CD4-positive, alpha-beta T cell (primary cell): ENCODE measurements at regions of chr17 and their contacts with region 1.

Region 1: DNA sequence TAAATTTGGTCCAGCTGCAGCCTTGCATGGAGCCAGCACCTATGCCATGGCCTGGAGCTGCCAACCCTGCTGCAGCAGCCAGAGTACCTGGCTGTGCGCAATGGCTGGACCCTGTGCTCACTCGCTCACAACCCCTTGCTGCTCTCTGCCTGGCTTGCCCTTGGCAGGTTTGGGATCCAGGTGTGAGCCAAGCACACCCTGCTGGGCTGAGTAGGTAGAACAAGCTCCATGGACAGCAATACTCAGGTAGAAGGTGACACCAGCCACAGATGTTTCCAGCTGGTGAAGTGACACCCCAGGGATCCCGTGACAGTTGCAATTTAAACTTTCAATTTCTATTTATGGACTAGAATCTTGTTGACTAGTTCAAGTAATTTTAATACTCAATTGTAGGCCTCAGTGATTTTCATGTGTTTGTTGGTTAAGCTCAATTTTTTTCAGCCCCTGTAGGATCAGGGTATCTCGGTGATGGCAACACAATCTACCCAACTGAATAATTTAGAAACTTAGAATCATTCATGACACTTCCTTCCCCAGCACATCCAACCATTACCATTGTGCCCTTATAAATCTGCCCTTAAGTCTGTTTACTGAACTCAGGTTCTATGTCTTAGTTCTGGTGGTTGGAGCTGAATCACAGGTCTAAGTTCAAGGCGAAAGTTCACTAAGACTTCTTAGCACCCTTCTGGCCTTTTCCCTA is 480.0 kb downstream of the PMP22 start:
- DNase-seq: peak in 13 of 14 experiments; percentile 2 to 62 (median 30)
- ATAC-seq: peak; percentile 69
- H3K4me3 ChIP-seq: no peak overlapping the region
- H3K4me3 Mint-ChIP-seq: no peak overlapping the region
- H3K27ac ChIP-seq: no peak overlapping the region
- H3K27ac Mint-ChIP-seq: no peak overlapping the region
- H3K4me1 ChIP-seq: no peaks in the 10 kb centered on the region
- H3K4me1 Mint-ChIP-seq: no peaks in the 10 kb centered on the region
- H3K27me3 ChIP-seq: no peaks in the 10 kb centered on the region
- H3K27me3 Mint-ChIP-seq: peaks cover 11% of the 10 kb centered on the region
- CTCF ChIP-seq: peak; percentile 13

Region 2: GRCh38 chr17:14211801-14212200 is 573.3 kb before region 1 on chr17:
- CTCF ChIA-PET with region 1: no interaction called
- POLR2A ChIA-PET with region 1: no interaction called
- intact Hi-C with region 1: loop called (anchors 10 kb)
- DNase-seq: peak in 8 of 14 experiments; percentile 12 to 73 (median 56)
- ATAC-seq: peak; percentile 54
- H3K4me3 ChIP-seq: no peak overlapping the region
- H3K4me3 Mint-ChIP-seq: no peak overlapping the region
- H3K27ac ChIP-seq: no peak overlapping the region
- H3K27ac Mint-ChIP-seq: no peak overlapping the region
- H3K4me1 ChIP-seq: peaks cover 16% of the 10 kb centered on the region
- H3K4me1 Mint-ChIP-seq: peaks cover 18% of the 10 kb centered on the region
- H3K27me3 ChIP-seq: no peaks in the 10 kb centered on the region
- H3K27me3 Mint-ChIP-seq: no peaks in the 10 kb centered on the region
- CTCF ChIP-seq: peak; percentile 31

Region 3: DNA sequence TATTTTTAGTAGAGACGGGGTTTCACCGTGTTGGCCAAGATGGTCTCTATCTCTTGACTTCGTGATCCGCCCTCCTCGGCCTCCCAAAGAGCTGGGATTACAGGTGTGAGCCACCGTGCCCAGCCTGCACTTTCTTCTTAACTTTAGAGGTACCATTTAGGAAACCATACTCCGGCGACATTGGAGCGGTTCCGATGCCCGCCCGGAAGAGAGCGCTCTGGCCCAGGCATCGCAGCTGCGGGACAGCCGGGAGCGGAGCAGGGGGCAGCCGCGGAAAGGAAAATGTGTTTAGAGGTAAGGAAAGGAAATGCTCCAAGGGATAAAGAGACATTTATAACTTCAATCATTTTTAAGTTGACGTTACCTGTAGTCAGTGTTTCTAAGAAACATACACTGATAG is 490.3 kb before region 1 on chr17:
- CTCF ChIA-PET with region 1: no interaction called
- POLR2A ChIA-PET with region 1: no interaction called
- intact Hi-C with region 1: loop called (anchors 1 to 5 kb)
- DNase-seq: peak in 1 of 14 experiments; percentile 32
- ATAC-seq: no peak
- H3K4me3 ChIP-seq: no peak overlapping the region
- H3K4me3 Mint-ChIP-seq: peak overlapping the region; percentile 5
- H3K27ac ChIP-seq: no peak overlapping the region
- H3K27ac Mint-ChIP-seq: no peak overlapping the region
- H3K4me1 ChIP-seq: peaks cover 36% of the 10 kb centered on the region
- H3K4me1 Mint-ChIP-seq: peaks cover 45% of the 10 kb centered on the region
- H3K27me3 ChIP-seq: peaks cover 33 to 50% of the 10 kb centered on the region in 2 experiments
- H3K27me3 Mint-ChIP-seq: peaks cover 88% of the 10 kb centered on the region
- CTCF ChIP-seq: peak; percentile 38

Region 4: GRCh38 chr17:14871921-14872320 is 86.8 kb after region 1 on chr17:
- CTCF ChIA-PET with region 1: no interaction called
- POLR2A ChIA-PET with region 1: no interaction called
- intact Hi-C with region 1: no loop called
- DNase-seq: no peak
- ATAC-seq: no peak
- H3K4me3 ChIP-seq: no peak overlapping the region
- H3K4me3 Mint-ChIP-seq: no peak overlapping the region
- H3K27ac ChIP-seq: no peak overlapping the region
- H3K27ac Mint-ChIP-seq: no peak overlapping the region
- H3K4me1 ChIP-seq: no peaks in the 10 kb centered on the region
- H3K4me1 Mint-ChIP-seq: no peaks in the 10 kb centered on the region
- H3K27me3 ChIP-seq: peaks cover 0 to 1% of the 10 kb centered on the region in 2 experiments
- H3K27me3 Mint-ChIP-seq: peaks cover 5% of the 10 kb centered on the region
- CTCF ChIP-seq: no peak